ENCODE measurements at regions of chrX and their contacts with region 1.

Region 1: DNA sequence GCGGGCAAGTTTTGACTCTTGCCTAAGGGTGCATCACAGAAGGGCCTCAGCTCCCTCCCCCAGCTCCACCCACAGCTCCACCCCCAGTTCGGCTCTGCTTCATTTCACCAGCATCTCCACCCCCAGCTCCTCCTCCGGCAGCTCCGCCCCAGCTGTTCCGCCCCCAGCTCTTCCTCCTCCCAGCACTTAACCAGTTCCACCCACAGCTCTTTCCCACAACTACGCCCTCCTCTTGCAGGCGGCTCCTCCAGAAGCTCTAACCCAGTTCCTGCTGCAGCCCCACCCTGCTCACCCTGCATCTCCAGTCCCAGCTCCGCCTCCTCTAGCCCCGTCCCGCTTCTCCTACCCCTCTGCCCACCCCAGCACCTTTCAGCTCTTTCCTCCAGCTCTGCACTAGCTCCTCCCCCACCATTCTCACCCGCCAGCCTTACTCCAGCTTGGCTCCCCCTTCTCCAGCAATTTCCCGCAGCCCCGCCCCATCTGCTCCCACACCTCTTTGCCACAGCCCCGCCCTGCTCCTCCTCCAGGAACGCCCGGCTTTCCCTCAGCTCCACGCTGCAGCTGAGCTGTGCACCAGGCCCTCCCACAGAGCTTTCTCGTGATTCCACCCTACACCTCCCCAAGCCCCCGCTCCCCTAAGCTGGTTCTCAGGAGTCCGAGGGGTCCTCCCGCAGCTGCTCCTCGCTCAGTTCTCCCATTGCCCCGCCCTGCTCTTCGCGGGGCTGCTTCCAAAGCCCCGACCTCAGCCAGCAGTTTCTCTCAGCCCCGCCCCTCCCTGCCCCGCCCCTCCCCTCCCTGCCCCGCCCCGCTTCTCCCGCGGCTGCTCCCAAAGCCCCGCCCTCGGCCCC is 1.3 kb upstream of the EOLA1 start:
- DNase-seq: peak; percentile 74 to 96 (median 85)
- ATAC-seq: peak; percentile 54
- H3K4me3 ChIP-seq: peak overlapping the region; percentile 58 to 76
- H3K4me3 Mint-ChIP-seq: peak overlapping the region; percentile 85
- H3K27ac ChIP-seq: peak overlapping the region; percentile 61 to 71
- H3K27ac Mint-ChIP-seq: peak overlapping the region; percentile 81
- H3K4me1 ChIP-seq: peaks cover 7% of the 10 kb centered on the region
- H3K4me1 Mint-ChIP-seq: peaks cover 6% of the 10 kb centered on the region
- H3K27me3 ChIP-seq: no peaks in the 10 kb centered on the region
- H3K27me3 Mint-ChIP-seq: no peaks in the 10 kb centered on the region
- CTCF ChIP-seq: no peak

Region 2: GRCh38 chrX:148588649-148589310 is 950.7 kb before region 1 on chrX:
- CTCF ChIA-PET with region 1: no interaction called
- POLR2A ChIA-PET with region 1: no interaction called
- intact Hi-C with region 1: no loop called
- DNase-seq: no peak
- ATAC-seq: no peak
- H3K4me3 ChIP-seq: no peak overlapping the region
- H3K4me3 Mint-ChIP-seq: no peak overlapping the region
- H3K27ac ChIP-seq: no peak overlapping the region
- H3K27ac Mint-ChIP-seq: no peak overlapping the region
- H3K4me1 ChIP-seq: no peaks in the 10 kb centered on the region
- H3K4me1 Mint-ChIP-seq: no peaks in the 10 kb centered on the region
- H3K27me3 ChIP-seq: no peaks in the 10 kb centered on the region
- H3K27me3 Mint-ChIP-seq: no peaks in the 10 kb centered on the region
- CTCF ChIP-seq: no peak

Region 3: GRCh38 chrX:148649145-148649795 is 890.2 kb before region 1 on chrX:
- CTCF ChIA-PET with region 1: no interaction called
- POLR2A ChIA-PET with region 1: no interaction called
- intact Hi-C with region 1: no loop called
- DNase-seq: no peak
- ATAC-seq: no peak
- H3K4me3 ChIP-seq: no peak overlapping the region
- H3K4me3 Mint-ChIP-seq: no peak overlapping the region
- H3K27ac ChIP-seq: no peak overlapping the region
- H3K27ac Mint-ChIP-seq: no peak overlapping the region
- H3K4me1 ChIP-seq: no peaks in the 10 kb centered on the region
- H3K4me1 Mint-ChIP-seq: no peaks in the 10 kb centered on the region
- H3K27me3 ChIP-seq: no peaks in the 10 kb centered on the region
- H3K27me3 Mint-ChIP-seq: no peaks in the 10 kb centered on the region
- CTCF ChIP-seq: no peak

Region 4: DNA sequence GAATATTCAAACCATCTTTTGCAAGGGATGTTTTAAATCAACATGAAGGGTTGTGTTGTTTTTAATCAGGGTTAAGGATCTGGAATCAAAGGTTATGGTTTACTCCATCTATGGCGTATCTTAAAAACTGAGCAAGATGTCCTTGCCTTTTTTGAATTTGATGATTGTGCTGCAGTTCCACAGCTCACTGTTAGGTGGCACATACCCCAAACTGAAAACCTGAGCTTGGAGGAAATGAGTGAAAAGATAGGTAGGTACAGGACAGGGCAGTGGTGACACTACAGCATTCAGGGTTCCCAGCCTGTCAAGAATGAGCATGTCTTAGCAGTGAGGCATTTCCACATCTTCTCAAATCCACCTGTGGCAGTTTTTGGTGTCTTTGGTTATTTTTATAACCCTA is 11.8 kb before region 1 on chrX:
- CTCF ChIA-PET with region 1: interaction called, 16 read pairs
- POLR2A ChIA-PET with region 1: interaction called, 5 read pairs
- intact Hi-C with region 1: loop called in 1 of 2 experiments (anchors 2 kb)
- DNase-seq: peak in 4 of 9 experiments; percentile 34 to 74 (median 51)
- ATAC-seq: peak; percentile 41
- H3K4me3 ChIP-seq: no peak overlapping the region
- H3K4me3 Mint-ChIP-seq: no peak overlapping the region
- H3K27ac ChIP-seq: peak overlapping the region in 1 of 2 experiments; percentile 37
- H3K27ac Mint-ChIP-seq: peak overlapping the region; percentile 74
- H3K4me1 ChIP-seq: peaks cover 22% of the 10 kb centered on the region
- H3K4me1 Mint-ChIP-seq: peaks cover 30% of the 10 kb centered on the region
- H3K27me3 ChIP-seq: no peaks in the 10 kb centered on the region
- H3K27me3 Mint-ChIP-seq: no peaks in the 10 kb centered on the region
- CTCF ChIP-seq: no peak

Region 5: GRCh38 chrX:149938427-149939270 is 399.1 kb after region 1 on chrX and contains the start of gene EOLA2:
- CTCF ChIA-PET with region 1: no interaction called
- POLR2A ChIA-PET with region 1: interaction called, 39 read pairs
- intact Hi-C with region 1: no loop called
- DNase-seq: peak; percentile 83 to 98 (median 91)
- ATAC-seq: peak; percentile 52
- H3K4me3 ChIP-seq: peak within 1 kb of the TSS; percentile 69 to 89
- H3K4me3 Mint-ChIP-seq: peak within 1 kb of the TSS; percentile 94
- H3K27ac ChIP-seq: peak within 1 kb of the TSS; percentile 92 to 99
- H3K27ac Mint-ChIP-seq: peak within 1 kb of the TSS; percentile 98
- H3K4me1 ChIP-seq: peaks cover 7% of the 10 kb centered on the region
- H3K4me1 Mint-ChIP-seq: peaks cover 3% of the 10 kb centered on the region
- H3K27me3 ChIP-seq: no peaks in the 10 kb centered on the region
- H3K27me3 Mint-ChIP-seq: no peaks in the 10 kb centered on the region
- CTCF ChIP-seq: no peak
- total RNA-seq, gene EOLA2: 43.7 to 44.4 TPM